ENCODE measurements at regions of chr5 and their contacts with region 1.

Region 1: DNA sequence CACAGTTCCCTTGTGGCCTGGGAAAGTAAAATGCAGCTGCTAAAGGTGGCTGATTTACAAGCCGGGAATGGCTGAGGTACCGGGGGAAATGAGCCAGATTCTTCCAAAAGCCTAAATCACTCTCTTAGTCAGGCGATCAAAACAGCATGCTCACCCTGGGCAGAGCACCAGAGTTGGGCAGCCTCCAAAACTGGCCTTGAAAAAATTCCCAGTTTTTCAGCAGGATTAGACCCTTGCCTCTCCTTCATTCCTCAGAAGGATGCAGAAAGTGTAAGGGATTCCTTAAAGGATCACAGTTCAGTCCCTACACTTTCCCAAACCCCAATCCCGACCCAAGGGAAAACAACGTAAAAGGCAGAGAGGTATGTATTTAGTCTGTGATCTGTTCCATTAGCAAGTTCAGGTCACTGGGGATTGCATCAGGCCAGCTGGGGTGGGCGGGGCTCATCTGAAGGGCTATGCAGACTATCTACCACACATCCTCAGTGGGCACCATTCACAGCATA is 16.9 kb downstream of the TMEM174 start:
- DNase-seq: no peak
- H3K4me3 ChIP-seq: no peak overlapping the region
- H3K27ac ChIP-seq: no peak overlapping the region
- H3K4me1 ChIP-seq: peaks cover 0 to 13% (median 0%) of the 10 kb centered on the region in 3 donors
- H3K27me3 ChIP-seq: peaks cover 0 to 15% (median 0%) of the 10 kb centered on the region in 4 donors
- CTCF ChIP-seq: no peak
- POLR2A ChIP-seq: no peak

Region 2: DNA sequence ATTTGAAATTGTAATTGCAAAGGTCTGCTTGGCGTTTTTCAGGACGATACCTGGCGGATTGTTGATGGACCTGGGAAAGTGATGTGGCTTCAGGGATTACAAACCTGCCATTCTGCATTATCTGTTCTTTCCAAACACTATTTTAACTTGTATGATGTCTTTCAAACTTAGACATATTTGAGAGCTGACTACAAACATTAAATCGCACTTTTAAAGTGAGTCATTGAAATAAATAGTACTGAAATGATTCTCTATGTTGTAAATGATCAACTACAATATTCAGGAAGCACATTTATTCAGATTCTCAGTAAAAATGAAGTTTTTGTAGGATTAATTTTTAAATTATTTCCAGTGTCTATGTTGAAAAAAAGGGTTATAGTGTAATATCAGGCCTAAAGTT is 101.9 kb before region 1 on chr5:
- intact Hi-C with region 1: loop called (anchors 10 kb)
- DNase-seq: no peak
- H3K4me3 ChIP-seq: no peak overlapping the region
- H3K27ac ChIP-seq: no peak overlapping the region
- H3K4me1 ChIP-seq: no peaks in the 10 kb centered on the region
- H3K27me3 ChIP-seq: no peaks in the 10 kb centered on the region
- CTCF ChIP-seq: no peak
- POLR2A ChIP-seq: no peak

Measured in esophagus squamous epithelium (tissue), 5 donors.